ENCODE measurements at regions of chr5 and their contacts with region 1.

Region 1: DNA sequence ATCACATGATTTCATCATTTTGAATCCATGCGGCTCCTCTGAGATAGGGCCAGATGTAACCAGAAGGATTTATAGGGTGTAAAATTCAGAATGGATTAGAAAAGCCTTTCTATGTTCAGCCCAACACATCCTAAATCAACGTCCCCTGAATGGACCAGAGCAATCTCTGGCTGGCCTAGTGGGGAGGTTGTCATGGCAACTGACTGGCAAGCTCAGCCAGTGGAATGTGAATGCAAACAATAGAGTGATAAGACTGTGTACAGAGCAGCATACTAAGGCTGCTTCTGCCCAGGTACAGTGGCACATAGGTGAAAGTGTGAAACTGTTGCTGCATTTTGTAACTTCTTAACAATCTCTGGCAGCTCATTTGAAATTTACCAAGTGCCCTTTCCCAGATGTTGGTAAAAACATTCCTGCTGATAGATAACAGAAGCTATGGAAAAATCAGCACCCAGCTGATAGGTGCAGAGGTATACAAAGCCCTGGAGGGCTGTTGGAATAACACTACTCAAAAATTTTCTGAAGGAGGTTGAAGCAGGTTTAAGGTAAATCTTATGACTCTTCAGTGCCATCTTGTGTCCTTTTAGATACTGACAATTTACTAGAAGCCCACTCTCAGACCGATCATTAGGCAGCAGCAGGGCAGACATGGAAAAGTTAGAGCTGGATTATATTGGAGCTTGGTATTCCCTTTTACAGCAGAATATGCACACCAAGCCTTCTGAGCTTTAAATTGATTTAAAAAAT is 267.2 kb downstream of the RAB3C start:
- DNase-seq: peak; percentile 87
- ATAC-seq: peak; percentile 100
- H3K4me3 ChIP-seq: no peak overlapping the region
- H3K27ac ChIP-seq: no peak overlapping the region
- H3K4me1 ChIP-seq: peaks cover 9% of the 10 kb centered on the region
- H3K27me3 ChIP-seq: no peaks in the 10 kb centered on the region
- CTCF ChIP-seq: peak; percentile 51
- EP300 ChIP-seq: peak in 1 of 2 experiments; percentile 42; a peak in 1 of 4 replicates
- POLR2A ChIP-seq: no peak
- RAD21 ChIP-seq: no peak

Region 2: GRCh38 chr5:57779383-57780223 is 1070.5 kb before region 1 on chr5:
- CTCF ChIA-PET with region 1: no interaction called
- POLR2A ChIA-PET with region 1: no interaction called
- in situ Hi-C with region 1: no loop called
- intact Hi-C with region 1: loop called (anchors 5 kb)
- DNase-seq: peak; percentile 49
- ATAC-seq: peak; percentile 83
- H3K4me3 ChIP-seq: no peak overlapping the region
- H3K27ac ChIP-seq: no peak overlapping the region
- H3K4me1 ChIP-seq: peaks cover 31% of the 10 kb centered on the region
- H3K27me3 ChIP-seq: no peaks in the 10 kb centered on the region
- CTCF ChIP-seq: peak; percentile 66
- EP300 ChIP-seq: no peak
- POLR2A ChIP-seq: no peak
- RAD21 ChIP-seq: peak; percentile 38; the same call in 1 of the 2 replicates

Region 3: GRCh38 chr5:58498340-58498942 is 351.7 kb before region 1 on chr5:
- CTCF ChIA-PET with region 1: interaction called, 12 read pairs
- POLR2A ChIA-PET with region 1: no interaction called
- in situ Hi-C with region 1: no loop called
- intact Hi-C with region 1: loop called (anchors 1 kb)
- DNase-seq: peak; percentile 24
- ATAC-seq: 0 out of 3 replicates have a peak, but pooled peaks have one; percentile 40
- H3K4me3 ChIP-seq: no peak overlapping the region
- H3K27ac ChIP-seq: no peak overlapping the region
- H3K4me1 ChIP-seq: no peaks in the 10 kb centered on the region
- H3K27me3 ChIP-seq: no peaks in the 10 kb centered on the region
- CTCF ChIP-seq: peak; percentile 66
- EP300 ChIP-seq: no peak
- POLR2A ChIP-seq: no peak
- RAD21 ChIP-seq: no peak